MCF 10A (cell line): ENCODE measurements at regions of chr7 and their contacts with region 1.

Region 1: GRCh38 chr7:79308192-79308591 is 145.3 kb downstream of the MAGI2 start:
- DNase-seq: peak; percentile 39
- H3K4me3 Mint-ChIP-seq: no peak overlapping the region
- H3K27ac Mint-ChIP-seq: no peak overlapping the region
- H3K4me1 Mint-ChIP-seq: no peaks in the 10 kb centered on the region
- H3K27me3 Mint-ChIP-seq: no peaks in the 10 kb centered on the region
- CTCF ChIP-seq: peak; percentile 23

Region 2: DNA sequence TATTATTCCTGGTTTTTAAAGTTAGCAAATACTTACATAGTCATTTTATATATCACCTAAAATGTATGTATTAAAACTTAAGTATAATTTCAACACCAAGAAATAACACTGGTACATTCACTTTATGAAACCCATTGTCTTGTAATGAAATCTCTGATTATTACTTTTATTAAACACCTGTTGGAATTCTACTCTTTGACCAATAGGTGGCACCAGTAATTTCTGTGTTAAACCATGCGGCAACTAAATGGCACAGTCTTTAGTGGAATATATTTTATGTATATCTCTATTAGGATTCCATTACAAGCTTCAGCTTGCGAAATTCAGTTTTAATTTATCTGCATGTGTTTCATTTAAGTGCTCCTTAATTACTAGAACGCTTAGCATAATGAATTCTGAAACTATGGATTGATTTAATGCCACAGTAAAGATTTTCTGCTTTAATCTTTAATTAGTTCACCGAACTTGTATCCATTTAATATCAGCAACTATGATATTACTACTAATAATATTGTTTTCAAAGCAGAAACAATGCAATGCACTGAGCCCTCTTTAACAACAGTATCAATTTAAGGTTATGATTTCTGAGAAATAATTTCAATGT is 36.0 kb before region 1 on chr7:
- CTCF ChIA-PET with region 1: interaction called, 3 read pairs
- POLR2A ChIA-PET with region 1: no interaction called
- intact Hi-C with region 1: loop called (anchors 1 kb)
- DNase-seq: peak; percentile 63
- H3K4me3 Mint-ChIP-seq: no peak overlapping the region
- H3K27ac Mint-ChIP-seq: no peak overlapping the region
- H3K4me1 Mint-ChIP-seq: no peaks in the 10 kb centered on the region
- H3K27me3 Mint-ChIP-seq: peaks cover 10% of the 10 kb centered on the region
- CTCF ChIP-seq: peak; percentile 35